ENCODE measurements at regions of chr10 and their contacts with region 1.

Region 1: GRCh38 chr10:92087750-92088395 is 164.3 kb downstream of the BTAF1 start:
- DNase-seq: peak; percentile 14 to 66 (median 38)
- ATAC-seq: peak; percentile 96
- H3K4me3 ChIP-seq: no peak overlapping the region
- H3K4me3 Mint-ChIP-seq: no peak overlapping the region
- H3K27ac ChIP-seq: no peak overlapping the region
- H3K27ac Mint-ChIP-seq: no peak overlapping the region
- H3K4me1 ChIP-seq: no peaks in the 10 kb centered on the region
- H3K4me1 Mint-ChIP-seq: peaks cover 2% of the 10 kb centered on the region
- H3K27me3 ChIP-seq: no peaks in the 10 kb centered on the region
- H3K27me3 Mint-ChIP-seq: no peaks in the 10 kb centered on the region
- CTCF ChIP-seq: peak; percentile 55

Region 2: DNA sequence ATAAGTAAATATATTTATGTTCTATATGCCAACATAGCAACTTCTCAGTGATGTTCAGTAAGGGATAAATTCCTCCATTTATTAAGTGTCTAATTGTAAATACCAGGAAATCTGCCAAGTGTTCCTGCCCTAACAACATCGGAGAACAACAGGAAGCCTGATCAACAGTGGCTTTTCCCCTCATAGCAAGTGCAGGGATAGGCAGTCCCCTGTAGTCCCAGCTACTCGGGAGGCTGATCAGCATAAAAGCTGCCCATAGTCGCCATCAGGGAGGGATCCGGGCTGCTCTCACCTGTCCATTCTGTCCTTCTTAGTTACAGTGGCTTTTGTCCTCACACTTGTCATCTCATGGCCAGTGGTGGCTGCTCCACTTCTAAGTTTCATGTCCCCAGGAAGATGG is 344.7 kb after region 1 on chr10:
- CTCF ChIA-PET with region 1: interaction called, 24 read pairs
- POLR2A ChIA-PET with region 1: interaction called, 4 read pairs
- intact Hi-C with region 1: loop called (anchors 1 kb)
- DNase-seq: no peak
- ATAC-seq: no peak
- H3K4me3 ChIP-seq: no peak overlapping the region
- H3K4me3 Mint-ChIP-seq: no peak overlapping the region
- H3K27ac ChIP-seq: no peak overlapping the region
- H3K27ac Mint-ChIP-seq: no peak overlapping the region
- H3K4me1 ChIP-seq: no peaks in the 10 kb centered on the region
- H3K4me1 Mint-ChIP-seq: no peaks in the 10 kb centered on the region
- H3K27me3 ChIP-seq: no peaks in the 10 kb centered on the region
- H3K27me3 Mint-ChIP-seq: no peaks in the 10 kb centered on the region
- CTCF ChIP-seq: no peak

Region 3: GRCh38 chr10:92573798-92574547 is 486.1 kb after region 1 on chr10 and contains the start of gene IDE:
- CTCF ChIA-PET with region 1: interaction called, 3 read pairs
- POLR2A ChIA-PET with region 1: no interaction called
- intact Hi-C with region 1: loop called (anchors 1 to 5 kb)
- DNase-seq: peak; percentile 43 to 89 (median 76)
- ATAC-seq: peak; percentile 70
- H3K4me3 ChIP-seq: peak within 1 kb of the TSS; percentile 85 to 100
- H3K4me3 Mint-ChIP-seq: peak within 1 kb of the TSS; percentile 93
- H3K27ac ChIP-seq: peak within 1 kb of the TSS; percentile 74 to 92
- H3K27ac Mint-ChIP-seq: peak within 1 kb of the TSS; percentile 93
- H3K4me1 ChIP-seq: peaks cover 18% of the 10 kb centered on the region
- H3K4me1 Mint-ChIP-seq: peaks cover 42% of the 10 kb centered on the region
- H3K27me3 ChIP-seq: no peaks in the 10 kb centered on the region
- H3K27me3 Mint-ChIP-seq: no peaks in the 10 kb centered on the region
- CTCF ChIP-seq: no peak
- total RNA-seq, gene IDE: 12.1 to 13.2 TPM

Region 4: DNA sequence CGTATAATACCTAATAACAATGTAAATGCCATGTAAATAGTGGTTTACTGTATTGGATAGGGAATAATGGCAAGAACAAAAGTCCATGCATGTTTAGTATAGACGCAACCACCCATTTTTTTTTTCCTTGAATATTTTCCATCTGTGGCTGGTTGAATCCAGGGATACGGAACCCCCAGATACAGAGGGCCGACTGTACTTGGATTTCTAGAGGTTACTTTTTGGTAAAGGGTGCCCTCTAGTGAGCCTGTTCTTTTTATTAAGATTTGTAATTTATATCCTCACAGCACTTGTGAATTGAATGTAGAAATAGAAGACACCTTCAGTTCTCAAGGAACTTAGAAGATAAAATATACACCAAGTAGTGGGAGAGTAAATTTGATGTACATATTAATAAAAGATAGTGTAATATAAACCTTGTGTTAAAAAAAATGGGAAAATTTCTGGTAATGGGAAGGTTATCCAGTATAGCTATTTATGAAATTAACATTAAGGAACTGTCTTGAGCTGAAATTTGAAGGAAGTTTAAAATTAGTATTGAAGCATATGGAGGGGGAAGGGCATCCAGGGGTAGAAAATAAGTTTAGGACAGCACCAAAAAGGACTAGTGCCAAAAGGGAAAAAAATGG is 792.5 kb after region 1 on chr10:
- CTCF ChIA-PET with region 1: no interaction called
- POLR2A ChIA-PET with region 1: no interaction called
- intact Hi-C with region 1: loop called in 1 of 2 experiments (anchors 5 kb)
- DNase-seq: peak in 3 of 9 experiments; percentile 5 to 56 (median 45)
- ATAC-seq: no peak
- H3K4me3 ChIP-seq: no peak overlapping the region
- H3K4me3 Mint-ChIP-seq: no peak overlapping the region
- H3K27ac ChIP-seq: no peak overlapping the region
- H3K27ac Mint-ChIP-seq: no peak overlapping the region
- H3K4me1 ChIP-seq: peaks cover 12% of the 10 kb centered on the region
- H3K4me1 Mint-ChIP-seq: peaks cover 23% of the 10 kb centered on the region
- H3K27me3 ChIP-seq: no peaks in the 10 kb centered on the region
- H3K27me3 Mint-ChIP-seq: no peaks in the 10 kb centered on the region
- CTCF ChIP-seq: peak; percentile 52